ENCODE measurements at regions of chr5 and their contacts with region 1.

Region 1: GRCh38 chr5:79464695-79465332 is 49.1 kb downstream of the HOMER1 start:
- DNase-seq: peak in 1 of 2 experiments; percentile 11
- H3K4me3 ChIP-seq: no peak overlapping the region
- H3K4me3 Mint-ChIP-seq: no peak overlapping the region
- H3K27ac Mint-ChIP-seq: no peak overlapping the region
- H3K4me1 ChIP-seq: peaks cover 7% of the 10 kb centered on the region; the same call in 1 of the 2 replicates
- H3K4me1 Mint-ChIP-seq: peaks cover 9% of the 10 kb centered on the region
- H3K27me3 ChIP-seq: no peaks in the 10 kb centered on the region
- H3K27me3 Mint-ChIP-seq: no peaks in the 10 kb centered on the region
- CTCF ChIP-seq: peak; percentile 60 to 66

Region 2: GRCh38 chr5:79255786-79256557 is 208.8 kb before region 1 on chr5:
- CTCF ChIA-PET with region 1: no interaction called
- POLR2A ChIA-PET with region 1: no interaction called
- intact Hi-C with region 1: loop called (anchors 1 kb)
- DNase-seq: peak; percentile 69 to 70
- H3K4me3 ChIP-seq: no peak overlapping the region
- H3K4me3 Mint-ChIP-seq: no peak overlapping the region
- H3K27ac Mint-ChIP-seq: no peak overlapping the region
- H3K4me1 ChIP-seq: no peaks in the 10 kb centered on the region
- H3K4me1 Mint-ChIP-seq: peaks cover 7% of the 10 kb centered on the region
- H3K27me3 ChIP-seq: no peaks in the 10 kb centered on the region
- H3K27me3 Mint-ChIP-seq: no peaks in the 10 kb centered on the region
- CTCF ChIP-seq: peak; percentile 72 to 74

Region 3: GRCh38 chr5:79333852-79334557 is 130.8 kb before region 1 on chr5:
- CTCF ChIA-PET with region 1: no interaction called
- POLR2A ChIA-PET with region 1: no interaction called
- intact Hi-C with region 1: loop called (anchors 1 kb)
- DNase-seq: no peak
- H3K4me3 ChIP-seq: no peak overlapping the region
- H3K4me3 Mint-ChIP-seq: no peak overlapping the region
- H3K27ac Mint-ChIP-seq: no peak overlapping the region
- H3K4me1 ChIP-seq: no peaks in the 10 kb centered on the region
- H3K4me1 Mint-ChIP-seq: no peaks in the 10 kb centered on the region
- H3K27me3 ChIP-seq: no peaks in the 10 kb centered on the region; the same call in 1 of the 2 replicates
- H3K27me3 Mint-ChIP-seq: no peaks in the 10 kb centered on the region
- CTCF ChIP-seq: peak; percentile 13 to 21